Activated CD4-positive, alpha-beta memory T cell treated with anti-CD3 and anti-CD28 coated beads, Interleukin-2, amount 10 ng/mL, durations not matched to agents 7 days and 5 days (primary cell): ENCODE measurements at regions of chr22 and their contacts with region 1.

Region 1: GRCh38 chr22:36331306-36331911 is 56.4 kb downstream of the MYH9 start:
- DNase-seq: peak; percentile 87
- H3K4me3 Mint-ChIP-seq: peak overlapping the region; percentile 82
- H3K27ac Mint-ChIP-seq: peak overlapping the region; percentile 100
- H3K4me1 Mint-ChIP-seq: peaks cover 98% of the 10 kb centered on the region
- H3K27me3 Mint-ChIP-seq: no peaks in the 10 kb centered on the region

Region 2: DNA sequence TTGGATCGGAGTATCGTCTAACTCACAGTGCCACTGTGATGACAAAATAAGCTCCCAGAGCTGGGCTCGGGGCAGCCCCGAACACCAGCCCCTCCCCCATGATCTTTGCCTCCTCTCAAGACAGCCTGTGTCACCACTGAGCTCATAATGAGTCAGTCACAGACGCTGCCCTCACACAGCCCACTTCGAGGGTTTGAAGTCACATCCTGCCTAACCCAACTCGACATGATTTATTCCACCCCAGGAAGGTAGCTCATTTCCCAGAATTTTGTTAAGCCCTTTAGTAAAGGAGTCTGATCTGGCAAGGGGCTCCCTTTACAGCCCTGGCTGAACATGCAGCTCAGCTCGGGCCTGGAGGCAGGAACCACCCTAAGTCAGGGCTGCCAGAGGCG is 33.6 kb after region 1 on chr22:
- CTCF ChIA-PET with region 1: interaction called, 20 read pairs
- POLR2A ChIA-PET with region 1: interaction called, 355 read pairs
- DNase-seq: peak; percentile 90
- H3K4me3 Mint-ChIP-seq: peak overlapping the region; percentile 51
- H3K27ac Mint-ChIP-seq: peak overlapping the region; percentile 85
- H3K4me1 Mint-ChIP-seq: peaks cover 97% of the 10 kb centered on the region
- H3K27me3 Mint-ChIP-seq: no peaks in the 10 kb centered on the region

Region 3: GRCh38 chr22:36379593-36380361 is 48.4 kb after region 1 on chr22:
- CTCF ChIA-PET with region 1: interaction called, 27 read pairs
- POLR2A ChIA-PET with region 1: interaction called, 98 read pairs
- DNase-seq: peak; percentile 72
- H3K4me3 Mint-ChIP-seq: peak overlapping the region; percentile 75
- H3K27ac Mint-ChIP-seq: peak overlapping the region; percentile 98
- H3K4me1 Mint-ChIP-seq: peaks cover 96% of the 10 kb centered on the region
- H3K27me3 Mint-ChIP-seq: no peaks in the 10 kb centered on the region

Region 4: DNA sequence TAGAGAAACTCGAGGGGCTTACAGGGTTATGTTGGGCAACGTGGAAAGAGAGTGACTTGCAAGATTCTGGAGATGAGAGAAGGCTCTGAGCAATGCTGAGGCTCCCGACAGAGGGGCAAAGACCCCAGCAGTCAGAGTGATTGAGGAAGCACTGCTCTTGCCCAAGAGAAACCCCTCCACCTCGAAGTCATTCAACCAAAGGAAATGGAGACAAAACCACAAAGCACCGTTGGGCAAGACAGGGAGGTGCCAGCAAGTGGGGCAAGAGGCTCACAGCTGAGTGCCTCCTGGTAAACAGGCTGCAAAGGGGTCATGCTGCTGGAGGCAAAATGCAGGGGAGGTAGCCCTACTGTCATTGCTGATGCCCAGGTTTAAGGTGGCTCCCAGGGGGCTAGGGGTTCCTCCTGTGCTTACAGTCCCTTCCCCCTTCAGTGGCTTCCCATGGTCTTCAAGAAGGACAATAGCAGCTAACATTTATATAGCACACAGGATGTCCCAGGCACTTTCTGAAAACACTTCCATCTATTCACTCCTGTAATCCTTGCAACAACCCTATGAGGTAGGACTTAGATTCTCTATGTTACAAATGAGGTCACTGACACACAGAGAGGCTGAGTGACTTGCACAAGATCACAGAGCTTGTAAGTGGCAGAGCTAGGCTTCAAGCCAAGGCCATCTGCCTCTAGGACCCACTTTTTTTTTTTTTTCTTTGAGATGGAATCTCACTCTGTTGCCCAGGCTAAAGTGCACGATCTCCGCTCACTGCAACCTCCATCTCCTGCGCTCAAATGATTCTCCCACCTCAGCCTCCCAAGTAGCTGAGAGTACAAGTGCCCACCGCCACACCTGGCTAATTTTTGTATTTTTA is 74.5 kb after region 1 on chr22:
- CTCF ChIA-PET with region 1: interaction called, 3 read pairs
- POLR2A ChIA-PET with region 1: interaction called, 15 read pairs
- DNase-seq: peak; percentile 80
- H3K4me3 Mint-ChIP-seq: peak overlapping the region; percentile 22
- H3K27ac Mint-ChIP-seq: peak overlapping the region; percentile 99
- H3K4me1 Mint-ChIP-seq: peaks cover 68% of the 10 kb centered on the region
- H3K27me3 Mint-ChIP-seq: no peaks in the 10 kb centered on the region

Region 5: GRCh38 chr22:36486619-36487384 is 155.4 kb after region 1 on chr22:
- CTCF ChIA-PET with region 1: interaction called, 12 read pairs
- POLR2A ChIA-PET with region 1: interaction called, 4 read pairs
- DNase-seq: peak; percentile 66
- H3K4me3 Mint-ChIP-seq: no peak overlapping the region
- H3K27ac Mint-ChIP-seq: no peak overlapping the region
- H3K4me1 Mint-ChIP-seq: peaks cover 7% of the 10 kb centered on the region
- H3K27me3 Mint-ChIP-seq: no peaks in the 10 kb centered on the region

Region 6: GRCh38 chr22:36606114-36606513 is 274.7 kb after region 1 on chr22:
- CTCF ChIA-PET with region 1: no interaction called
- POLR2A ChIA-PET with region 1: no interaction called
- DNase-seq: no peak
- H3K4me3 Mint-ChIP-seq: no peak overlapping the region
- H3K27ac Mint-ChIP-seq: no peak overlapping the region
- H3K4me1 Mint-ChIP-seq: no peaks in the 10 kb centered on the region
- H3K27me3 Mint-ChIP-seq: peaks cover 39% of the 10 kb centered on the region